Dendritic cell treated with granulocyte-macrophage colony-stimulating factor and Interleukin-4, amounts not matched to agents 40 ng/mL and 50 ng/mL, for 4 days (primary cell): ENCODE measurements at regions of chr12 and their contacts with region 1.

Region 1: GRCh38 chr12:4421590-4422031 is 24.0 kb downstream of the FGF6 start:
- H3K4me3 Mint-ChIP-seq: no peak overlapping the region
- H3K27ac Mint-ChIP-seq: no peak overlapping the region
- H3K4me1 Mint-ChIP-seq: peaks cover 29% of the 10 kb centered on the region
- H3K27me3 Mint-ChIP-seq: peaks cover 14% of the 10 kb centered on the region

Region 2: GRCh38 chr12:4307593-4308333 is 113.8 kb before region 1 on chr12:
- intact Hi-C with region 1: loop called (anchors 5 kb)
- H3K4me3 Mint-ChIP-seq: no peak overlapping the region
- H3K27ac Mint-ChIP-seq: no peak overlapping the region
- H3K4me1 Mint-ChIP-seq: peaks cover 6% of the 10 kb centered on the region
- H3K27me3 Mint-ChIP-seq: no peaks in the 10 kb centered on the region

Region 3: DNA sequence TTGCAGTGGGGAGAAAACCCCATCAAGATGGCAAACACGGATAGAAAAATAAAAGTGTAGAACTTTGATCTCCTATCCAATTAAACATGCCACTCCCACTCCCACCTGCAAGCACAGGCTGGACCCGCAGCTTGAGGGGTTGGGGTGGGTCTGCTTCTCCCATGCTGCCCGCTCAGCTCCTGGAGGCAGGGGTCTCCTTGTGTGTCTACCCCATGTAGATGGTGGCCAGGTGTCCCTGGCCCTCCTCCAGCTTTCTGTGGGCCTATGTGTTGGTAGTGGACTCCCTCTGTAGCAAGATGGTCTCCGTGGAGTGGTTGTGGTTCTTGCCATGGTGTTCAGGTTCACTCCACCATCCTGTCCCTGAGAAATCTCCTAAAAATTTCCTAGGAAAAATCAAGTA is 18.6 kb before region 1 on chr12:
- intact Hi-C with region 1: no loop called
- H3K4me3 Mint-ChIP-seq: no peak overlapping the region
- H3K27ac Mint-ChIP-seq: no peak overlapping the region
- H3K4me1 Mint-ChIP-seq: no peaks in the 10 kb centered on the region
- H3K27me3 Mint-ChIP-seq: peaks cover 18% of the 10 kb centered on the region

Region 4: GRCh38 chr12:4451694-4452093 is 30.1 kb after region 1 on chr12:
- intact Hi-C with region 1: no loop called
- H3K4me3 Mint-ChIP-seq: peak overlapping the region; percentile 7
- H3K27ac Mint-ChIP-seq: peak overlapping the region; percentile 60
- H3K4me1 Mint-ChIP-seq: peaks cover 54% of the 10 kb centered on the region
- H3K27me3 Mint-ChIP-seq: peaks cover 23% of the 10 kb centered on the region